Heart left ventricle (tissue), 16 donors: ENCODE measurements at regions of chr9 and their contacts with region 1.

Region 1: GRCh38 chr9:20289423-20290010 is 332.8 kb downstream of the MLLT3 start:
- DNase-seq: no peak
- ATAC-seq: no peak
- H3K4me3 ChIP-seq: no peak overlapping the region
- H3K27ac ChIP-seq: no peak overlapping the region
- H3K4me1 ChIP-seq: peaks cover 0 to 13% (median 0%) of the 10 kb centered on the region in 12 donors
- H3K27me3 ChIP-seq: no peaks in the 10 kb centered on the region
- CTCF ChIP-seq: no peak
- POLR2A ChIP-seq: no peak

Region 2: GRCh38 chr9:20028849-20029231 is 260.7 kb before region 1 on chr9:
- intact Hi-C with region 1: loop called in 3 of 10 experiments (anchors 5 to 10 kb)
- DNase-seq: peak in 2 of 5 donors; percentile 14 to 22
- ATAC-seq: peak; percentile 57 to 79 (median 70)
- H3K4me3 ChIP-seq: no peak overlapping the region
- H3K27ac ChIP-seq: peak overlapping the region in 10 of 12 donors; percentile 4 to 89 (median 40)
- H3K4me1 ChIP-seq: peaks cover 0 to 26% (median 5%) of the 10 kb centered on the region in 12 donors
- H3K27me3 ChIP-seq: no peaks in the 10 kb centered on the region
- CTCF ChIP-seq: no peak
- POLR2A ChIP-seq: no peak

Region 3: DNA sequence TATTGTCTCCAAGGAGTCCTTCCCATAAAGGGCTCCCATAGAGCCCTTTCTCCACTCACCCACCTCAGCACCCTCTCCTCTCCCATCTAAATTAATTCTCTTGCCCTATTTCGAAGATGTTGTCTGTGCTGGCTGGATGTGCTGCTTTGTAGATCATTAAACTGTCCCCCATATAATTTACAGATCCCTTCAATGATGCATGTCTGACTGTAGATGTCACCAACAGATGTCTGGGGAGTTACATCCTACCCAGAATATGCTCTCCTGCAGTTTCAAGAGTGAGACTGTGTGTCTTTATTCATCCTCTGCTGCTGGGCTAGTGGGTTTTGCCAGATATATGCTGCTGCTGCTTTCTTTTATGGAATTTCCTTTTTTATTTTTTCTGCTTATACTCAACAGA is 18.4 kb before region 1 on chr9:
- intact Hi-C with region 1: loop called in 1 of 10 experiments (anchors 2 kb)
- DNase-seq: no peak
- ATAC-seq: no peak
- H3K4me3 ChIP-seq: no peak overlapping the region
- H3K27ac ChIP-seq: no peak overlapping the region
- H3K4me1 ChIP-seq: no peaks in the 10 kb centered on the region
- H3K27me3 ChIP-seq: no peaks in the 10 kb centered on the region
- CTCF ChIP-seq: no peak
- POLR2A ChIP-seq: no peak